HEK293 (cell line): ENCODE measurements at regions of chr4 and their contacts with region 1.

Region 1: GRCh38 chr4:80365928-80366327 is 30.4 kb downstream of the CFAP299 start:
- H3K4me3 ChIP-seq: no peak overlapping the region
- H3K27ac ChIP-seq: no peak overlapping the region
- H3K4me1 ChIP-seq: no peaks in the 10 kb centered on the region
- CTCF ChIP-seq: no peak

Region 2: GRCh38 chr4:81040012-81040659 is 674.2 kb after region 1 on chr4:
- CTCF ChIA-PET with region 1: interaction called, 15 read pairs
- POLR2A ChIA-PET with region 1: no interaction called
- H3K4me3 ChIP-seq: no peak overlapping the region
- H3K27ac ChIP-seq: no peak overlapping the region
- H3K4me1 ChIP-seq: no peaks in the 10 kb centered on the region; the same call in 1 of the 2 replicates
- CTCF ChIP-seq: 0 out of 2 replicates have a peak, but pooled peaks have one; percentile 23

Region 3: DNA sequence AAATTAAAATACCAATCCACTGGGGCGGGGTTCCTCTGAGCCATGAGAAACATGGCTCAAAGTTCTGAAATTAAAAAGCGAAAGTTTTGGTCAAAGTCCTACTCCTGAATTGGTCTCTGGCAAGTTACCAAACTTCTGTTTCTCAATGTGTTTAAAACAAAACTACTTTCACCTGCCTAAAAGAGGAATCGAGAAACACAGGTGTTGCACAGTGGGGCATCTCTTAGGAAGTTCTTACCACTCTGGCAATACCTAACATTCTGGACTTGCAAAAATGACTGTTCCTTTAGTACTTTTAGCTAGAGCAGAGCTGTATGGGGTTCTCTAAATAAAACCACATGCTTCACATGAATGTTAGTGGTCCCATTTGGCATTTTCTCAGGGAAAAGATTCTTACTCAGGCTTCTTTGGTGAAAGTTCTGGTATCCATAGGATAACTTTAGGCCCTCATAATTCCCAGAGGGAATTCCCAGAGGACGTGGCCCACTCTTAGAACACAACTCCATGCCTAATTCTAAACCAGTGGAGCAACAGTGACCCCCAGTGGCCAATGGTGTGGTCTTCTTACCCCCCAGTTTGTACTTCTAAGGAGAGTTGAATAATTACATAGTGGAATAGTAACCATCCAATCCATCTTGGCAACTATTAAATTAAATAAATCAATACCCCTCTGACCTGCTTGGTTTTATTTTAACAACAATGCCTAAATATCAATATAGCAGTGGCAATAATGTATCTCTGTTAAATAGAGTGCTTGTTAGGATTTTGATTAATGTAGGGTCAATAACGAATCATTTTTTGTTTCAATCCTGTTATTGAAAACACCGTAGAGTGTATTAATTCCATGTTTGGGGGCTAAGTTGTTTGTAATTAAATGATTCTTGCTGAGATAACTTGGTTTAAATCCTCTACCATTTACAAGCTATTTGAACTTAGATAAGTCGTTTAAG is 686.5 kb after region 1 on chr4:
- CTCF ChIA-PET with region 1: interaction called, 16 read pairs
- POLR2A ChIA-PET with region 1: no interaction called
- H3K4me3 ChIP-seq: no peak overlapping the region
- H3K27ac ChIP-seq: no peak overlapping the region
- H3K4me1 ChIP-seq: no peaks in the 10 kb centered on the region
- CTCF ChIP-seq: no peak